ENCODE measurements at regions of chr6 and their contacts with region 1.

Region 1: DNA sequence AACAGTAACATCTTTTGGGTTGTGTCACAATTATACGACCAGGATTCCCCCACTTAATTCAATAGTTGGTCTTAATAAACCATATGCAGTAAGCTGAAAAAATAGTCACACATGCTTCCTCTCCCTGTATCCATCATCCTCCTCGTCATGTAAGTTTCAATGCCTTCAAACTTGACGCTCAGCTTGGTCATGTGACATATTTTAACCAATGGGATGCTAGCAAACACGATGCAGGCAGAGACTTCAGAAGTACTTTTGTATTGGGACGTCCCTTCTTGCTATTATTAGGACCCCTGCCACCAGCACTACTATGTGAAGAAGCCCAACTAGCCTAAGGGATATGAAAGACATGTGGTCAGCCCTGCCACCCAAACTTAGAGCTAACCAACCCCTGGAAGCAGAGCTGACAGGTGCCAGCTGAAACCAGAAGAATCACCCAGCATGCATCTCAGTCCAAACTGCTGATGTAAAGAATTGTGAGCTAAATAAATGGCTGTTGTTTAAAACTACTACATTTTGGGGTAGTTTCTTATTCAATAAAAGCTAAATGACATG is 49.3 kb downstream of the CGA start:
- DNase-seq: no peak
- ATAC-seq: no peak
- H3K4me3 Mint-ChIP-seq: no peak overlapping the region
- H3K27ac Mint-ChIP-seq: no peak overlapping the region
- H3K4me1 Mint-ChIP-seq: no peaks in the 10 kb centered on the region
- H3K27me3 Mint-ChIP-seq: peaks cover 23% of the 10 kb centered on the region

Region 2: GRCh38 chr6:86782328-86782727 is 263.3 kb before region 1 on chr6:
- CTCF ChIA-PET with region 1: no interaction called
- POLR2A ChIA-PET with region 1: no interaction called
- intact Hi-C with region 1: no loop called
- DNase-seq: no peak
- ATAC-seq: no peak
- H3K4me3 Mint-ChIP-seq: no peak overlapping the region
- H3K27ac Mint-ChIP-seq: no peak overlapping the region
- H3K4me1 Mint-ChIP-seq: no peaks in the 10 kb centered on the region
- H3K27me3 Mint-ChIP-seq: no peaks in the 10 kb centered on the region

Region 3: DNA sequence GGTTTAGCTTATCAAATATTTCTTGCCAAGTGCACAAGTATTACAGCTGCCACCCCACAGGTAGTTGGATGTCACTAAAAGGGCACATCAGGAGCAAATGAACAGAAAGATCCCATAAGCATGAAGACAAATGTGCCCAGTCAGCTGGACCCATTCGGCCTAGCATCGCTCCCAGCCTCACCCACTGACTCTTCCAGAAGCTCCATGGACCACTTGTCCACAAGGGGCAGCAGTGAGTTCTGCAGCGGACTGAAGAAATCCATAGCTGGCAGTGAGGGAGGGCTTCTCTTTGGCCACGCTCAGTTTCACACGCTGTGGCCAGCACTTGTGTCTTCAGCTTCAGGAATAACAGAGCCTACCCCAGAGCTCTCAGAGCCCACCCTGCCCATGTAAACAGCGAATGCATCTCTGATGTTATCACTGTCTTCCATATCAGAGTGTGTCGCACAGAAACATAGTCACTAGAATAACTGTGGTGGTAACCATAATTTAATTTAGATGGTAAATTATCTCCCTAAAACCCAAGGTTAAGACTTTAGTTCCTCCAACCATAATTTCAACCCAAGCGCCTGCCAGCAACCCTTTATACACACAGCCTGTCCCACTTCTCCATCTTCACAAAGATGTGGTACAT is 33.5 kb after region 1 on chr6:
- CTCF ChIA-PET with region 1: interaction called, 17 read pairs
- POLR2A ChIA-PET with region 1: no interaction called
- intact Hi-C with region 1: no loop called
- DNase-seq: peak; percentile 76
- ATAC-seq: peak; percentile 84
- H3K4me3 Mint-ChIP-seq: no peak overlapping the region
- H3K27ac Mint-ChIP-seq: no peak overlapping the region
- H3K4me1 Mint-ChIP-seq: no peaks in the 10 kb centered on the region
- H3K27me3 Mint-ChIP-seq: peaks cover 18% of the 10 kb centered on the region

Measured in activated CD4-positive, alpha-beta T cell treated with anti-CD3 and anti-CD28 coated beads for 36 hours (primary cell).